ENCODE measurements at regions of chr1 and their contacts with region 1.

Region 1: GRCh38 chr1:237386362-237387143 is 344.6 kb downstream of the RYR2 start:
- DNase-seq: no peak
- H3K4me3 ChIP-seq: no peak overlapping the region
- H3K27ac ChIP-seq: peak overlapping the region; percentile 38 to 68
- H3K4me1 ChIP-seq: peaks cover 0 to 37% (median 8%) of the 10 kb centered on the region in 4 donors
- H3K27me3 ChIP-seq: no peaks in the 10 kb centered on the region
- CTCF ChIP-seq: peak; percentile 71 to 77

Region 2: GRCh38 chr1:236759252-236759859 is 627.2 kb before region 1 on chr1:
- intact Hi-C with region 1: loop called (anchors 10 kb)
- DNase-seq: no peak
- H3K4me3 ChIP-seq: no peak overlapping the region
- H3K27ac ChIP-seq: no peak overlapping the region
- H3K4me1 ChIP-seq: no peaks in the 10 kb centered on the region
- H3K27me3 ChIP-seq: no peaks in the 10 kb centered on the region
- CTCF ChIP-seq: peak; percentile 53 to 66

Region 3: DNA sequence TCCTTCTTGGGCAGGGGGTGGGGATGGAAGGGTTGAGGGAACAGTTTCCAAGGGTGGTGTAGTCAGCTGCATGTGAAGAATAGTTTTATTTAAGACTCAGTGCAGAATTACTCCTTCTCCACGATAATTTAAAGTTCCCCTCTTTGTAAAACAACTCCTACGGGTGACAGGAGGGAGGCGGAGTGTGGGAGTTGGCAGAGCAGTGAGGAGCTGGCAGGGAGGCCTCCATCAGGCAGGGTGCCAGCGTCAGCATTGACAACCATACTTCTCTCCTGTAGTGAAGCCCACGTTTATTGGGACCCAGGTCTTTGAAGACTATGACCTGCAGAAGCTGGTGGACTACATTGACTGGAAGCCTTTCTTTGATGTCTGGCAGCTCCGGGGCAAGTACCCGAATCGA is 497.6 kb before region 1 on chr1:
- intact Hi-C with region 1: loop called (anchors 5 kb)
- DNase-seq: peak in 1 of 2 donors; percentile 71
- H3K4me3 ChIP-seq: no peak overlapping the region
- H3K27ac ChIP-seq: no peak overlapping the region
- H3K4me1 ChIP-seq: peaks cover 0 to 9% (median 0%) of the 10 kb centered on the region in 4 donors
- H3K27me3 ChIP-seq: no peaks in the 10 kb centered on the region
- CTCF ChIP-seq: no peak

Region 4: GRCh38 chr1:237041795-237042525 is 344.6 kb before region 1 on chr1 and contains the start of gene RYR2:
- intact Hi-C with region 1: loop called (anchors 10 kb)
- DNase-seq: peak in 1 of 2 donors; percentile 76
- H3K4me3 ChIP-seq: peak within 1 kb of the TSS; percentile 74 to 86
- H3K27ac ChIP-seq: peak within 1 kb of the TSS; percentile 82 to 86
- H3K4me1 ChIP-seq: peaks cover 0 to 48% (median 19%) of the 10 kb centered on the region in 4 donors
- H3K27me3 ChIP-seq: peaks cover 0 to 5% of the 10 kb centered on the region in 2 donors
- CTCF ChIP-seq: peak; percentile 40 to 83